ENCODE measurements at regions of chr20 and their contacts with region 1.

Region 1: GRCh38 chr20:41339507-41340326 is 904 bp upstream of the LPIN3 start:
- DNase-seq: peak; percentile 78 to 89 (median 86)
- ATAC-seq: peak; percentile 85
- H3K4me3 ChIP-seq: peak overlapping the region; percentile 44
- H3K27ac ChIP-seq: no peak overlapping the region
- H3K4me1 ChIP-seq: peaks cover 8 to 28% of the 10 kb centered on the region in 2 experiments; a peak in 4 of 5 replicates
- H3K27me3 ChIP-seq: peaks cover 2 to 9% of the 10 kb centered on the region in 2 experiments; a peak in 3 of 5 replicates
- CTCF ChIP-seq: peak; percentile 94 to 95 (median 95)
- EP300 ChIP-seq: no peak
- POLR2A ChIP-seq: no peak
- RAD21 ChIP-seq: peak; percentile 97 to 98

Region 2: DNA sequence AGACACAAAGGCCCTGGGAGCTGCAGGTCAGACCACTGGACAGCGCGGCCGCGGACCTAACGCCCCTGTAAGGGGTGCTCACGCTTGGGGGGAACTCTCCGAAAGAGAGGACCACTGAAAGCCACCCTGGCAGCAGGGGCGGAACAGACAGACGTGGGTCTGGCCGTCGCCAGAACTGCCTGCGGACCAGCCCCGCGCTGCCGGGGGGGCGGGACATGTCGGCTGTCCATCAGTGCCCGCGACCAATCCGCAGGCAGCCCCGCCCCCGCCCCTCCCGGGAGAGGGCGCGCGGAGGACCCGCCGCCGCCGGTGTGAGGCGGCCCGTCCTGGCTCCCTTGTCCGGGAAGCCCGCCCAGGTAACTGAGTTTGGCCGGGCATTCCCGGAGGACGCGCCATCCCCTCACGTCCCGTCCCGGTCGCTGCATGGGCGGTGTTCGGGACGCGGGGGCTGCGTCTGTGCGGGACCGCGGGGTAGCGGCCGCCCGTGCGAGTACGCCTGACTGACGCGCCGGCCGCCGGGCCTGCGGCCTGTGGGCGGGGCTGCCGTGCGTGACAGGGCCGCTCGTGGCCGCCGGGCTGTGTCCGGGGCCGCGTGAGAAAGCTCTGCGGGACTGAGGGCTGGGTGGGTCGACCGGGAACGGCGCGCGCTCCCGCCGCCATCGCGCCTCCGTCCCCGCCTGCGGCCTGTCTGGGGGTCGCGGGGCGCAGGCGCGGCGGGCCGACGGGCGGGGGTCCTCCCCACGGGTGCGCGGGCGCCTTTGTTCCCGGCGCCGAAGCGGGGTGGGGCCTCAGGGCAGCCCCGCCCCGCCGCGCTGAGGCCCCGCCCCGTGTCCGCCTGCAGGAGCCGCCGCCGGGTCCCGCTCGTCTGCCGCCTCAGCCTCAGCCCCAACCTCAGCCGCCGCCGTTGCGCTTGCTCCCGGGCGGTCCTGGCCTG is 202.8 kb before region 1 on chr20 and contains the start of gene PLCG1:
- CTCF ChIA-PET with region 1: interaction called, 3 read pairs
- POLR2A ChIA-PET with region 1: no interaction called
- in situ Hi-C with region 1: no loop called
- intact Hi-C with region 1: loop called (anchors 1 kb)
- DNase-seq: peak; percentile 91 to 98 (median 98)
- ATAC-seq: peak; percentile 86
- H3K4me3 ChIP-seq: peak within 1 kb of the TSS; percentile 74
- H3K27ac ChIP-seq: peak within 1 kb of the TSS; percentile 86
- H3K4me1 ChIP-seq: peaks cover 33 to 47% of the 10 kb centered on the region in 2 experiments; a peak in 4 of 5 replicates
- H3K27me3 ChIP-seq: no peaks in the 10 kb centered on the region
- CTCF ChIP-seq: no peak
- EP300 ChIP-seq: no peak
- POLR2A ChIP-seq: peak; percentile 78
- RAD21 ChIP-seq: no peak
- polyA plus RNA-seq, gene PLCG1: 1.7 to 2.2 TPM

Region 3: GRCh38 chr20:41249406-41250281 is 90.1 kb before region 1 on chr20:
- CTCF ChIA-PET with region 1: interaction called, 49 read pairs
- POLR2A ChIA-PET with region 1: no interaction called
- in situ Hi-C with region 1: no loop called
- intact Hi-C with region 1: loop called (anchors 1 kb)
- DNase-seq: peak; percentile 20 to 58 (median 49)
- ATAC-seq: peak; percentile 92
- H3K4me3 ChIP-seq: no peak overlapping the region
- H3K27ac ChIP-seq: no peak overlapping the region
- H3K4me1 ChIP-seq: peaks cover 0 to 2% of the 10 kb centered on the region in 2 experiments; a peak in 3 of 5 replicates
- H3K27me3 ChIP-seq: no peaks in the 10 kb centered on the region; a peak in 1 of 5 replicates
- CTCF ChIP-seq: peak; percentile 67 to 74 (median 68)
- EP300 ChIP-seq: no peak
- POLR2A ChIP-seq: no peak
- RAD21 ChIP-seq: peak; percentile 80 to 83

Region 4: DNA sequence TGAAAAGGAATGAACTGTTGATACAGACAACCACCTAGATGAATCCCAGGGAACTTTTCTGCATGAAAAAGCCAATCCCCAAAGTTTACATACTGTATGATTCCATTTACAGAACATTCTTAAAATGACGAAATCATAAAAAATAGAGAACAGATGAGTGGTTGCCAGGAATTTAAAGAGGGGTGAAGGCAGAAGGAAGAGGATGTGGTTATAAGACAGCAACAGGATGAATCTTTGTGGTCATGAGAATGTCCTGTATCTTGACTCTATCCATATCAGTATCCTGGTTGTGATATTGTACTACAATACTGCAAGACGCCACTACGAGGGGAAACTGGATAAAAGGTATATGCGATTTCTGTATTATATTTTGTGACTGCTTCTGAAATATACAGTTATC is 97.0 kb after region 1 on chr20:
- CTCF ChIA-PET with region 1: no interaction called
- POLR2A ChIA-PET with region 1: no interaction called
- in situ Hi-C with region 1: no loop called
- intact Hi-C with region 1: no loop called
- DNase-seq: no peak
- ATAC-seq: no peak
- H3K4me3 ChIP-seq: no peak overlapping the region
- H3K27ac ChIP-seq: no peak overlapping the region
- H3K4me1 ChIP-seq: no peaks in the 10 kb centered on the region
- H3K27me3 ChIP-seq: no peaks in the 10 kb centered on the region
- CTCF ChIP-seq: no peak
- EP300 ChIP-seq: no peak
- POLR2A ChIP-seq: no peak
- RAD21 ChIP-seq: no peak

Region 5: DNA sequence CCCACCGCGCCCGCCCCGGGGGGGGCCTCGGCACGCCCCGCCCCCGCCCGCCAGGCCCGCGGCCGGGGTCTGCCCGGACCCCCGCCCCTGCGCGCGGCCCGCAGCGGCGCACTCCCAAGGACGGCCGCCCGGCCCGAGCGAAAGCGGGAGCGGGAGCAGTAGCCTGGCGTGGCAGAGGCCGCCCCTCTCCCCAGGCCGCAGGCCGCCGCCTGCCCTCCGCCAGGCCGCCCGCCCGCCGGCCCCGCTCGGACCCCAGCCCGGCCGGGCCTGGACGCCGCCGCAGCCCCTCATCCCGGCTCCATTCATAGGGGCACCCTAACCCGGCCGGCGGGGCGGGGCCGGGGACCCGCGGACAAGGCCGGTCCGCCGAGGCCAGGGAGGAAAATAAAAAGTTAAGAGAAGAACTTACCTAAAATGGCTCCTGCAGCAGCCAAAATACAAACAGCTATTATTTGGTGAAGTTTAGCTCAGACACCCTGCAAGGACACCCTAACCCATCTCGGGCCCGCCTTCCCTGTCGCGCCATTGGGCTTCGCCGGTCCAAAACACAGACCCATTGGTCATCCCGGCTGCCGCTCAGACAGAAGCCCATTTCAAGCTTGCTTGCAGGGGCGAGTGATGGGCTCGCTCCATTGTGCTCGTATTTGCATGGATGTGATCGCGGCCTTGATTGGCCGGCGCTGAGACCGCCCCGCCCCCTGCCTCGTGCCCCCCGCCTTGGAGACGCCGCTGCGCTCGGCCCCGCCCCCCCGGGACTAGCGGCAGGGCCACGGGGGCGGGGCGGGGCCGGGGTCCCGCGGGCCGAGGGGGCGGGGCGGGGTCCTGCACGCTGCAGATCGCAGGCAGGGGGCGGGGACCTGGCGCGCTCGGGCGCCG is 278.5 kb after region 1 on chr20 and contains the start of gene CHD6:
- CTCF ChIA-PET with region 1: no interaction called
- POLR2A ChIA-PET with region 1: no interaction called
- in situ Hi-C with region 1: no loop called
- intact Hi-C with region 1: loop called (anchors 10 kb)
- DNase-seq: peak; percentile 97 to 100 (median 98)
- ATAC-seq: peak; percentile 99
- H3K4me3 ChIP-seq: peak within 1 kb of the TSS; percentile 96
- H3K27ac ChIP-seq: peak within 1 kb of the TSS; percentile 90
- H3K4me1 ChIP-seq: peaks cover 5 to 21% of the 10 kb centered on the region in 2 experiments
- H3K27me3 ChIP-seq: no peaks in the 10 kb centered on the region; a peak in 1 of 5 replicates
- CTCF ChIP-seq: no peak
- EP300 ChIP-seq: no peak
- POLR2A ChIP-seq: peak; percentile 71
- RAD21 ChIP-seq: no peak
- polyA plus RNA-seq, gene CHD6: 3.9 to 10.9 TPM

Region 6: DNA sequence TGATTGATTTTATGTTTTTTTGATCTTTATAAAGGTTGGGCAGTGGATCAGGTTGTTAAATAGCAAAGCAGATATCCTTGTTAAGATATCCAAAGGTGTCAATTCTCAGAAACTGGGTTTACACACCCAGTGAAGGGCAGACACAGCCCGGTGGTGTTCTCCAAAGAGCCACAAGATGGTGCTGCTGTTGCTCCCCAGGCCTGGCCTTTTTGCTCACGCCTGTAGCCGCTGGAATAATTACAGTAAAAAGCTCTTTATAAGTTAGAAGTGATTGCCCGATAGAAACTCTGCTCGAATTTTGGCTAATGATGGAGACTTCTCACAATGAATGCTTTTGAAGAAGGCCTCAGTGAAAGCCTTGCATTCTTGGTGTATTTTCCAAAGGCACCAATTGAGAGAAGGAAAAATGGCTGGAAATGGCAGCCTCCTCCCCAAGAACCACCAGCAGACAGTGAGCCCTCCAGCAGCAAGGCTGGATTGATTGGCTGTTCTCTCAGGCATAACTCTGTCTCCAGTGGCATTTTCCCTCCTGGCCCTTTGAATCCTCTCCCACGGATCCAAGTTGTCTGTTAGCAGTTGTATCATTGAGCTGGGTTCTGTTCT is 399.0 kb after region 1 on chr20:
- CTCF ChIA-PET with region 1: no interaction called
- POLR2A ChIA-PET with region 1: no interaction called
- in situ Hi-C with region 1: no loop called
- intact Hi-C with region 1: loop called (anchors 5 kb)
- DNase-seq: peak; percentile 57 to 79 (median 64)
- ATAC-seq: peak; percentile 97
- H3K4me3 ChIP-seq: no peak overlapping the region
- H3K27ac ChIP-seq: no peak overlapping the region
- H3K4me1 ChIP-seq: no peaks in the 10 kb centered on the region; a peak in 1 of 5 replicates
- H3K27me3 ChIP-seq: no peaks in the 10 kb centered on the region
- CTCF ChIP-seq: peak; percentile 85 to 94 (median 93)
- EP300 ChIP-seq: no peak
- POLR2A ChIP-seq: no peak
- RAD21 ChIP-seq: peak; percentile 80 to 85